Activated B cell treated with CpG ODN at 0.5 μM for 24 hours (primary cell): ENCODE measurements at regions of chr17 and their contacts with region 1.

Region 1: DNA sequence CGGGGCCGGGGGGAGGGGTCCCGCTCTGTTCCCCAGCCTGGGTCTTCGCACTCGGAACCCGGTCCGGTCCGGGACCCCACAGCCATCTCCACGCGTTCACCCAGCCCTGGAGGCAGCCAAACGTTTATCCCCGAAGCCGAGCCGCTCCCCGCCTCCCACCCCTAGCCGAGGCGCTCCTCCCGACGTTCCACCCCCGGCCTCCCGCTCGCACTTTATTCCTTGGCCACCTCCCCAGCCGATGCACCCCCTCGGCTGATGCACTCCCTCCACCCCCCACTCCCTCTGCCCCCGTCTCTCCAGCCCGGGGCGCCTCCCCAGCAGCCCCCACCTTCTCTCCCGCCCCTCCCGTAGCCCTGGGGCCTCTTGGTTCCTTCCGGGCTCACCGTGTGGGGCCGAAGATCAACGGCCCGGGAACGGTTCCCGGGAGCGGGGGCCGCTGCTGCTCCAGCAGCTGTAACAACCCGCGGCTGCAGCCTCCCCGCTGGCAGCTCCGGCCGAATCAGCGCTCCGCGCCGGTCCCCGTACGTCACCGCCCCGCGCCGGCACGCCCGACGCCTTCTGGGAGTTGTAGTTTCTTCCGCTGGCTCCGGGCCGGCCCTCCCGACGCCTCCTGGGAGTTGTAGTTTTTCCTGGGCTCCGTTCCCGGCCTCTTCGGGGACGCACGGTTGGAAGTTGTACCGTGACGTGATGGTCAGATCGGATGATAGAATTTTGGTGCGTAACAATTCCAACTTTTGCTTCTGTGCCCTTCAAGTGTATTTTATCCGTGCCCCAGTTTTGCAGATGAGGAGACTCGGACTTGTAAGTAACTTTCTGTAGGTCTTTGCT is at the starts of genes LRRC3C and ORMDL3:
- DNase-seq: peak; percentile 91
- ATAC-seq: peak; percentile 92
- H3K4me3 Mint-ChIP-seq: peak within 1 kb of the TSS; percentile 97
- H3K27ac Mint-ChIP-seq: peak within 1 kb of the TSS; percentile 82
- H3K4me1 Mint-ChIP-seq: peaks cover 40% of the 10 kb centered on the region
- H3K27me3 Mint-ChIP-seq: no peaks in the 10 kb centered on the region
- CTCF ChIP-seq: no peak
- total RNA-seq, gene LRRC3C: not detected in 2 replicates
- total RNA-seq, gene ORMDL3: 38.5 and 49.1 TPM in 2 replicates

Region 2: DNA sequence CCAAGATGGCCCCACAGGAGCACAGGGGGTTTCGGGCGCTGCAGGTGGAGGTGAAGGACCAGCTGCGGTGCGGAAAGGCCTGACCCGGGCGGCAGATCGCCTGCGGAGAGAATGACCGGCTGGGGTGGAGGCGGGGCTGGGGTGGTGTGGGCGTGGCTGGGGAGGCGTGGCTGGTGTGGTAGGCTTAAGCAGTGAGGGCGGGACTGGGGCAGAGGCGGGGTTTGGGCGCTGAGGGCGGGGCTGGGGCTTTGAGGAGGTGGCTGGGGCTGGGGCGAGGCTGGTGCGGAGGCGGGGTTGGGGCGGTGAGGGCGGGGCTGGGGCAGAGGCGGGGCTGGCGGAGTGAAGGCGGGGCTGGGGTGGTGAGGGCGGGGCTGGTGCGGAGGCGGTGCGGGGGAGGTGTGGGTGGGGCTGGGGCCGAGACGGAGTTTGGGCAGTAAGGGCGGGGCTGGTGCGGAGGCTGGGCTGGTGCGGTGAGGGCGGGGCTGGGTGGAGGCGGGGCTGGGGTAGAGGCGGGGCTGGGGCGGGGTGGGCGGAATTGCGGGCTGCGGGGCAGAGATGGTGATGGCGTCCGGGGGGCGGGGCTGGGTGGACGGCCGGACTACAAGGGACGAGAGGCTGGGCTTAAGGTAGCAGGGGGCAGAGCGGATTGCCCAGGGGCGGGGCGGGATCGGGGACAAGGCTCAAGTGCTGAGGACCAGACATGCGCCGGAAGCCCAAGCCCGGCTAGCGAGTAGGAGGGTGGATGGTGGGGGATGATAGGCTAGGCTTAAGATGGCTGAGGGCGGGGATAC is 25.6 kb after region 1 on chr17:
- CTCF ChIA-PET with region 1: no interaction called
- POLR2A ChIA-PET with region 1: interaction called, 4 read pairs
- intact Hi-C with region 1: loop called (anchors 1 kb)
- DNase-seq: peak; percentile 88
- ATAC-seq: peak; percentile 85
- H3K4me3 Mint-ChIP-seq: peak overlapping the region; percentile 85
- H3K27ac Mint-ChIP-seq: peak overlapping the region; percentile 83
- H3K4me1 Mint-ChIP-seq: peaks cover 29% of the 10 kb centered on the region
- H3K27me3 Mint-ChIP-seq: no peaks in the 10 kb centered on the region
- CTCF ChIP-seq: no peak

Region 3: DNA sequence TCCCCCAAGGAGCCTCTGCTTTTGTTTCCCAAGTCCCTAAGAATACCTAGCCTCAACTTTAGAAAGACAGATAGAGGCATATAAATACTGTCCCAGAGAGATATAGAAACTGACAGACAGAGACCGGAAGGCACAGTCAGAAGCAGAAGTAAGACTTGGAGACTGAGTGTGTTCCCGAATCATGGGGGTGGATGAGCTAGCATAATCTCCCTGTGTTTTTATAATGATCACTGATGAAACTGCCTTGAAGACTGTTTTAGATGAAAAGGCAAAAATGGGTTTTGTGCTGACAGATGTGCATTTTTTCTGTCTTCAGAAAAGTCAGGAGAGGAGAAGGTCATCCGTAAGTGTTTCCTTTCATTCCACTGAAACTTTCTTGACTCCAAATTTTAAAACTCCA is 45.0 kb after region 1 on chr17:
- CTCF ChIA-PET with region 1: no interaction called
- POLR2A ChIA-PET with region 1: no interaction called
- intact Hi-C with region 1: no loop called
- DNase-seq: no peak
- ATAC-seq: no peak
- H3K4me3 Mint-ChIP-seq: no peak overlapping the region
- H3K27ac Mint-ChIP-seq: no peak overlapping the region
- H3K4me1 Mint-ChIP-seq: no peaks in the 10 kb centered on the region
- H3K27me3 Mint-ChIP-seq: peaks cover 39% of the 10 kb centered on the region
- CTCF ChIP-seq: no peak